ENCODE measurements at regions of chr17 and their contacts with region 1.

Region 1: DNA sequence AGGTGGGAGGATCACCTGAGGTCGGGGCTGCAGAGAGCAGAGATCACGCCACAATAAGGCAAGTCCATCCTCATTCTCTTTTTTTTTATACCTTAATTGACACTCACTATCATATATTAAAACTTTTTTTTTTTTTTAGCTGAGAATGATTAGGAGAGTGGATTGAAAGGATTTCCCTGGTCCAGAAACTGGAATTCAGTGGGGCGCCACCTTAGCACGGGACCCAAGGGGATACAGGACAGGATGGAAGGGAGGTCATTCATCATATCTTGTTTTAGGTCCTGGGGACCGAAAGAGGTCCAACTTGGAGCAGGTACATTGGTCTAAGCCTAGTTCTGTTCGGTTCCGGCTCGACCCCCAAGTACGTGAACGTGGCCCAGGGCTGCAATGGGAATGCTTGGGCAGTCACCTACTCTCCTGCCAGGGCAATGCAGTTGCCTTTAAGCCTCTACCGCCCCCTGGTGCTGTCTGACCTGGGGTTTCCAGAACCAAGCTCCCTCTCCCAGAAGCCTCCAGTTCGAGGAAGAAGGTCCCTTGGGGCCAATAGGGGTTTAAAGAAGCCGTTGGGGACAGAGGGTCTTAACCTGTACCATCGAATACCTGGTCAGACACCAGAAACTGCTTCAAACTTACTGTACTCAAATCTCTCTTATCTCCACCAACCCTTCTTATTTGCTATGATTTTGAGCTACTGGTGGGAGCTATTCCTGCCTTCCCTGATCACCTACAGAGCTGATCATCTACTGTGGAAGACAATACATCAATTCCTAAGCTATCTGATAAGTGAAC is 19.9 kb upstream of the GPATCH8 start:
- DNase-seq: no peak
- H3K4me3 ChIP-seq: no peak overlapping the region
- CTCF ChIP-seq: peak; percentile 75

Region 2: GRCh38 chr17:44095642-44096496 is 427.2 kb before region 1 on chr17:
- CTCF ChIA-PET with region 1: no interaction called
- POLR2A ChIA-PET with region 1: no interaction called
- DNase-seq: no peak
- H3K4me3 ChIP-seq: peak overlapping the region; percentile 51
- CTCF ChIP-seq: peak; percentile 38

Region 3: DNA sequence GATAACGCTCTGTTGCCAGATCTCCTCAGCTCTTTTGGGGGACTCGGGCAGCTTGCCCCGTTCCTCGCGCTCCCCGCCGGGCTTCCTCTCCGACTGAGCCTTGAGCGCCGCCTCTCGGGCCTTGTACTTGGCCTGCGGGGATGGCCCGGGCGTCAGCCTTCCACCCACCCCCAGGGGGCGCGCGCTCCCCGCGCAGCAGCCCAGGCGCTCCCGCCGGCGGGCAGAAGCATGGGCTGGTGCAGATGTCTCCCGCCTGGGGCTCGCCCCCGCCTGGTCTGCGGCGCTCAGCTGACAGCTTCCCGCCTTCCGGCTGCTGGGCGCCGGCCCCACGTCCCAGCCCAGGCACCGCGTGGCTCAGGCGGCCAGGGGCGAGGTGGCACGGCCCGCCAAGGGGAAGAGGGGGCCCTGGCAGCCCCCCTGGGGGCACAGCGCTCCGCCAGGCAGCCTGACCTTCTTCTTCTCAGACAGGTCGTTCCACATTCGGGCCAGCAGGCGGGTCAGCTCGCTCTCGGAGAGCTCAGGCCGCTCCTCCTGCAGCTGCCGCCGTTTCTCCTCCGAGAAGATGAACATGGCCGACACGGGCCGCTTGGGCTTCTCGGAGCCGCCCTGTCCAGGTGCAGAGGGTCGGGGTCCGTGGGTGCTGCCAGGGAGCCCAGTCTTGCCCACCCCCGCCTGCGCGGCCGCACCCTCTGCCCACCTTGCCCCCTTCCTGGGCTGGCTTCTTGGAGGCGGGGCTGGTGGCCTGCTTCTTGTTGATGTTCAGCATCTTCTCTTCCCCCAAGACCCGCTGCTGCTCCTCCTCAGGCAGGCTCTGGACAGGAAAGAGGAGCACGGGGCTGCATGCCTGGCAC is 312.5 kb before region 1 on chr17:
- CTCF ChIA-PET with region 1: interaction called, 25 read pairs
- POLR2A ChIA-PET with region 1: no interaction called
- DNase-seq: no peak
- H3K4me3 ChIP-seq: no peak overlapping the region
- CTCF ChIP-seq: peak; percentile 100

Region 4: GRCh38 chr17:44331249-44331760 is 191.8 kb before region 1 on chr17:
- CTCF ChIA-PET with region 1: interaction called, 13 read pairs
- POLR2A ChIA-PET with region 1: no interaction called
- DNase-seq: no peak
- H3K4me3 ChIP-seq: no peak overlapping the region
- CTCF ChIP-seq: peak; percentile 61

Region 5: DNA sequence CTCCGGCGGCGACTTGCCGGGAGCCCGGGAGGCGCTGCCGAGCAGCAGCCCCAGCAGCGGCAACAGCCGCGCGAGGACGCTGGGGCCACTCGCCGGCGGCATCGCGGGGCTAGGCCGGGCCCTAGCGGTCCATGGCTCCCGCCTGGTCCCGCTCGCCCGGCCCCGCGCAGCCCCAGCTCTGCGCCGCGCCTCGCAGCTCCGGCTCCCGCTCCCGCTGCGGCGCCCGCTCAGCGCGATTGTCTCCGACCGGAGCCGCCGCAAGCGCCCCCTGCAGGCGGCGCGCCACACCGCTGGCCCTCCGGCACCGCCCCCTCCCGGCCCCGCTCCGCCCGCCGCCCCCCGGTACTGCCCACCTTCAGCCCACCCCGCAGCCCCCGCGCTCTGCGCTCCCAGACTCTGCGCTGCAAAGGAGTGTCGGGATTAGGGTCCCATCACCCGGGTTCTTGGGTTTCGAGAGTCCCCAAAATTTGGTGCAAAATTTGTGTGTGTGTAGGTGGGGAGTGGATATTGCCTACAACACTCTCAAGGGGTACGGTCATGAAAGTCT is 159.4 kb before region 1 on chr17 and contains the start of gene FAM171A2:
- CTCF ChIA-PET with region 1: interaction called, 14 read pairs
- POLR2A ChIA-PET with region 1: no interaction called
- DNase-seq: no peak
- H3K4me3 ChIP-seq: peak within 1 kb of the TSS; percentile 70
- CTCF ChIP-seq: peak; percentile 64

Region 6: GRCh38 chr17:44400226-44400847 is 122.7 kb before region 1 on chr17:
- CTCF ChIA-PET with region 1: interaction called, 114 read pairs
- POLR2A ChIA-PET with region 1: no interaction called
- DNase-seq: no peak
- H3K4me3 ChIP-seq: no peak overlapping the region
- CTCF ChIP-seq: peak; percentile 41

Region 7: DNA sequence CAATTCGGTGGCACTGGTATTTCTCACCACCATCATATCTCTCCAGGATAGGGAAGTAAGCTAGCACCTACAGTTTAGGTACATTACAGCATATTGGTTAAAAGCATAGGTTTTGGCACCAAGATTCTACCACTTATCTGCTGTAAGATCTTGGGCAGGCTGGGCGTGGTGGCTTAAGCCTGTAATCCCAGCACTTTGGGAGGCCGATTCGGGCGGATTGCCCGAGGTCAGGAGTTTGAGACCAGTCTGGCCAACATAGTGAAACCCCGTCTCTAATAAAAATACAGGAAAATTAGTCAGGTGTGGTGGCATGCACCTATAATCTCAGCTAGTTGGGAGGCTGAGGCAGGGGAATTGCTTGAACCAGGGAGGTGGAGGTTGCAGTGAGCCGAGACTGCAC is 71.2 kb before region 1 on chr17:
- CTCF ChIA-PET with region 1: no interaction called
- POLR2A ChIA-PET with region 1: no interaction called
- DNase-seq: no peak
- H3K4me3 ChIP-seq: no peak overlapping the region
- CTCF ChIP-seq: no peak

Region 8: GRCh38 chr17:44503147-44504029 is 19.7 kb before region 1 on chr17 and contains the start of gene GPATCH8:
- CTCF ChIA-PET with region 1: interaction called, 17 read pairs
- POLR2A ChIA-PET with region 1: no interaction called
- DNase-seq: peak; percentile 52
- H3K4me3 ChIP-seq: peak within 1 kb of the TSS; percentile 88
- CTCF ChIP-seq: no peak

Region 9: DNA sequence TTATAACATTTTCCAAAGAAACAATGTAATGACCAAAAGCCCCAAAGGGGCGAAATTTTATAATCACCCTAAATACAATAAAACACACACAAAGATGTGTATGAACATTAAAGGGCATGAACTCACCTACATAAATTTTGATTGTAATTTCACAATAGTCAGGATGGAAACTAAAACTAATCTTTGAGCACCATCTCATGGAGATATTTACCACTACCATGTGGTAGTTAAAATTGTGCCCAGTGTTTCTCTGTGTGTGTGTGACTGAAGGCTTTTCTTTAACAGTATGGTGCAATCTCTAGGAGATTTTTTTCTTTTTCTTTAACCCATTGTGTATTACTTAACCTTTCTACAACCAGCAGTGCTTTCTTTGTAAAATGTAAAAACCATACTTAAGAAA is 113.5 kb after region 1 on chr17:
- CTCF ChIA-PET with region 1: interaction called, 309 read pairs
- POLR2A ChIA-PET with region 1: no interaction called
- DNase-seq: peak; percentile 23
- H3K4me3 ChIP-seq: no peak overlapping the region
- CTCF ChIP-seq: peak; percentile 49

Measured in AG04449 (cell line).